ENCODE measurements at regions of chr18 and their contacts with region 1.

Region 1: DNA sequence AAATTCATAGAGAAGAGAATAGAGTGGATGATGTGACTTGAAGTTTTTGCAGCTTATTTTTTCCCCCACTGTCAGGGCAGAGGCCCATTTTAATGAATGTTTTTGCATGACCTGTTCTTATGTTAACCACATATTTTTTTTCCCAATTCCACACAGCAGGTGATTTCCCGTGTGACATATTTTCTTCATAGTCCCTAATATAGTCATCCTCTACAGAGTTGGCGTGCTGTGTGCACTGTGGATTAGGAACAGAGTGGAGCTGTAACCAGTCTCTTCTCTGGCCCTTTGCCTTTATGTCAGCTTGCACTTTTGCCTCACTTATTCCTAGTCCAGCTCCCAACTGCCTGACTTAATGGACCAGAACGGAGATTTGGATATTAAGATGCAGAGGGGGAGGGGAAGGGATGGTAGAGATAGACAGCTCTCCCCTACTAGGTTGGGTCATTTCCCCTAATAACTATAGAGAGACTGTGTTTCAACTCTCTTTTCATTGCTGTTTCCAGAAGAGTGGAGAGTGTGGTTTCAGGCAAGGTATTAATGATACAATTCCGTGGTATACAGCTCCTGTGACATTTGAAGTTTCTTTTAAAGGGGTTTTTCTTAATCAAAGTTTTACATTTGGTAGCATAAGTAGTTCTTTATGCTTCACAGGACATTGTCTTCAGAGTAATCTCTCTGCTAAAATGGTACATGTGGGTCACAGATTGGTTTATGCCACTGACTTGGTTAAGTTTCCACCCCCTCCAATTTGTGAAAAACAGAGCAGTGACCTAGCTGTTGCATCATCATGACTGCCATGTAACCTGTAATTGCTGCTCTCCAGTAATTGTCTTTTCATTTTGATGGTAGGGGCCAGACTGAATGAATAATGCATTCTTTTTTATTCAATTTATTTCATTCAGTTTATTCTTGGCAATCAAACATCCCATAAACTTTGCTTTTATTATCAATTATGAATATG is 161.3 kb downstream of the HAUS1 start:
- DNase-seq: no peak
- ATAC-seq: no peak

Region 2: GRCh38 chr18:46173393-46174341 is 91.8 kb before region 1 on chr18:
- intact Hi-C with region 1: loop called (anchors 2 to 10 kb)
- DNase-seq: peak; percentile 96
- ATAC-seq: peak; percentile 97 to 98

Region 3: GRCh38 chr18:46215902-46216723 is 49.4 kb before region 1 on chr18:
- intact Hi-C with region 1: loop called in 1 of 2 experiments (anchors 5 kb)
- DNase-seq: peak; percentile 46
- ATAC-seq: peak; percentile 55 to 68

Measured in left cardiac atrium (tissue), 4 donors.